HepG2 (cell line): ENCODE measurements at regions of chr3 and their contacts with region 1.

Region 1: GRCh38 chr3:188154014-188154808 is at the start of gene LPP:
- DNase-seq: peak; percentile 47
- ATAC-seq: peak; percentile 88
- H3K4me3 ChIP-seq: peak within 1 kb of the TSS; percentile 83 to 92 (median 88)
- H3K27ac ChIP-seq: peak within 1 kb of the TSS; percentile 73
- H3K4me1 ChIP-seq: peaks cover 64% of the 10 kb centered on the region
- H3K27me3 ChIP-seq: no peaks in the 10 kb centered on the region
- CTCF ChIP-seq: peak; percentile 39
- EP300 ChIP-seq: peak in 1 of 2 experiments; percentile 4; a peak in 1 of 4 replicates
- POLR2A ChIP-seq: no peak; a peak in 1 of 4 replicates
- RAD21 ChIP-seq: peak; percentile 44
- total RNA-seq, gene LPP: 29.9 and 41.6 TPM in 2 replicates

Region 2: GRCh38 chr3:188052169-188053030 is 101.8 kb before region 1 on chr3:
- CTCF ChIA-PET with region 1: no interaction called
- POLR2A ChIA-PET with region 1: interaction called, 11 read pairs
- in situ Hi-C with region 1: no loop called
- intact Hi-C with region 1: loop called (anchors 2 kb)
- DNase-seq: peak; percentile 90
- ATAC-seq: peak; percentile 96
- H3K4me3 ChIP-seq: peak overlapping the region; percentile 10 to 51 (median 26); a peak in 4 of 6 replicates
- H3K27ac ChIP-seq: peak overlapping the region; percentile 72
- H3K4me1 ChIP-seq: peaks cover 76% of the 10 kb centered on the region
- H3K27me3 ChIP-seq: no peaks in the 10 kb centered on the region
- CTCF ChIP-seq: peak; percentile 86
- EP300 ChIP-seq: peak; percentile 62 to 71
- POLR2A ChIP-seq: peak; percentile 54 to 55; a peak in 2 of 4 replicates
- RAD21 ChIP-seq: peak; percentile 76

Region 3: DNA sequence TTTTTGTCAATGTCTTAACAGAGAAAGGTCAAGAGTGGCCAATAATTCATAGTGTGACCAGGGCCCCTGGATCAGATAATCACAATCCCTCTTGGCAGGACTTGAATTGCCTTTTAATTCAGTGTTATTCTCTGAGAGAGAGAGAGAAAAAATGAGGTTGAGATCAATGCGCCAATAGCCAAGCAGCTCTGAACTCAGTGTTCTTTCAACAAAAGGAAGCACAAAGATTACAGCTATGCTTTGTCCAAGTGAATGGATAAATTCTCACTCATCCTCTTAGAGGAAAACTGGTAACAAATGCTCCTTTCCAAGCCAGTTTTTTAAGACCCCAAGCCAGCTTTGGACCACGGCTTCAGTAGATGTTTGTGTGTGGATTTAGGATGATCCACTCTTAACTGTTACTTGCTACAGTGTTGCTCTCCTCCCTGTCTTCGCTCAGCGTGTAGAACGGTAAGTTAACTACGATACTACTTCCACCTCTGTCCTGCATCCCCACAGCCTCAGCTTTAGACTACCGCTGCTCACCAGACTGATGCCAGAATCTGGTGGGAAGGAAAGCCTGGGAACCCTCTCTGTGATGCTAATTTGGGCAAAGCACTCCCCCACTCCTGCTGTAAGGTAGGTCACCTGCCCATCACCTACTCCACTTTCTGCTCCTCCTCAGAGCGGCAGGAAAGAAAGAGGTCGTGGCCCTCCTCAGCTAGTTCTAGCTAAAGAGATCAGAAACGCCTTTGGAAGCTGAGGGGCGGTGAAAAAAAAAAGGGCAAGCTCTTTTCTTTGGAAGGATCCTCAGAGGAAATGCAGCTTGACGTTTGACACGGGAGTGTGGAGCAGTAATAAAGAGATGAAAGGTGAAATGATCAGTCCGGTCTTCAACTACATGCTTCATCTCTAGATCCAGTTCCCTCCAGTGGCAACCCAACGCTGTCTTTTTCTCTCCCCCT is 47.1 kb before region 1 on chr3:
- CTCF ChIA-PET with region 1: no interaction called
- POLR2A ChIA-PET with region 1: no interaction called
- in situ Hi-C with region 1: no loop called
- intact Hi-C with region 1: loop called (anchors 2 kb)
- DNase-seq: no peak
- ATAC-seq: peak; percentile 37; the same call in 1 of the 3 replicates
- H3K4me3 ChIP-seq: no peak overlapping the region
- H3K27ac ChIP-seq: no peak overlapping the region
- H3K4me1 ChIP-seq: peaks cover 50% of the 10 kb centered on the region
- H3K27me3 ChIP-seq: no peaks in the 10 kb centered on the region
- CTCF ChIP-seq: no peak
- EP300 ChIP-seq: no peak
- POLR2A ChIP-seq: no peak
- RAD21 ChIP-seq: no peak

Region 4: GRCh38 chr3:188170461-188171459 is 16.5 kb after region 1 on chr3:
- CTCF ChIA-PET with region 1: no interaction called
- POLR2A ChIA-PET with region 1: interaction called, 16 read pairs
- in situ Hi-C with region 1: no loop called
- intact Hi-C with region 1: loop called (anchors 2 kb)
- DNase-seq: peak; percentile 98
- ATAC-seq: peak; percentile 98
- H3K4me3 ChIP-seq: peak overlapping the region in 2 of 3 experiments; percentile 19 to 36; a peak in 3 of 6 replicates
- H3K27ac ChIP-seq: peak overlapping the region; percentile 83
- H3K4me1 ChIP-seq: peaks cover 96% of the 10 kb centered on the region
- H3K27me3 ChIP-seq: no peaks in the 10 kb centered on the region
- CTCF ChIP-seq: no peak
- EP300 ChIP-seq: peak; percentile 77 to 98; a peak in 3 of 4 replicates
- POLR2A ChIP-seq: no peak
- RAD21 ChIP-seq: no peak

Region 5: DNA sequence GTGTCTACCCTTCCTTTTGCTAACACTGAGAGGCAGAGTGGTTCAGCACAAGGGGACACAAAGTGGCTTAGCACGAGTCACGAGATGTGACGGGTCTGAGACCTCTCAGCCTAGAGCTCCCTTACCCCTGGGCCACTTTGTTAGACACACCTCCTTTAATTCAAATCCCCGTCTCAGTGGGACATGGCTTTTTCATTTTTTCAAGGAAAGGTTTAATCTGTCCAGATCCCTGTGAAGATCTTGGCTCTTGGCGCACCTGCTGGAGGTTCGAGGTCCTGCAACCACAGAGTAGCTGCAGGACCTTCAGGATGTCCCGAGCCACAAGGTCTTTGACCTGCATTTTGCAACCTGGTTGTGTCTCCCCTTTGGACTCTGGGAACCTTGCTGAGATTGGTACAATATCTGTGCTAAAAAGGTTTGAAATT is 51.8 kb after region 1 on chr3:
- CTCF ChIA-PET with region 1: no interaction called
- POLR2A ChIA-PET with region 1: interaction called, 6 read pairs
- in situ Hi-C with region 1: no loop called
- intact Hi-C with region 1: loop called (anchors 5 kb)
- DNase-seq: peak; percentile 81
- ATAC-seq: peak; percentile 93
- H3K4me3 ChIP-seq: no peak overlapping the region
- H3K27ac ChIP-seq: peak overlapping the region; percentile 50
- H3K4me1 ChIP-seq: peaks cover 30% of the 10 kb centered on the region
- H3K27me3 ChIP-seq: no peaks in the 10 kb centered on the region
- CTCF ChIP-seq: peak; percentile 66
- EP300 ChIP-seq: peak in 1 of 2 experiments; percentile 62; a peak in 2 of 4 replicates
- POLR2A ChIP-seq: no peak
- RAD21 ChIP-seq: peak; percentile 69

Region 6: GRCh38 chr3:188283347-188283746 is 129.1 kb after region 1 on chr3:
- CTCF ChIA-PET with region 1: no interaction called
- POLR2A ChIA-PET with region 1: no interaction called
- in situ Hi-C with region 1: no loop called
- intact Hi-C with region 1: loop called (anchors 2 kb)
- DNase-seq: peak; percentile 82
- ATAC-seq: peak; percentile 92
- H3K4me3 ChIP-seq: no peak overlapping the region
- H3K27ac ChIP-seq: peak overlapping the region; percentile 45
- H3K4me1 ChIP-seq: peaks cover 52% of the 10 kb centered on the region
- H3K27me3 ChIP-seq: no peaks in the 10 kb centered on the region
- CTCF ChIP-seq: peak; percentile 44
- EP300 ChIP-seq: peak in 1 of 2 experiments; percentile 53; a peak in 1 of 4 replicates
- POLR2A ChIP-seq: no peak
- RAD21 ChIP-seq: peak; percentile 75

Region 7: GRCh38 chr3:188294823-188295487 is 140.7 kb after region 1 on chr3:
- CTCF ChIA-PET with region 1: no interaction called
- POLR2A ChIA-PET with region 1: interaction called, 10 read pairs
- in situ Hi-C with region 1: no loop called
- intact Hi-C with region 1: no loop called
- DNase-seq: peak; percentile 99
- ATAC-seq: peak; percentile 90
- H3K4me3 ChIP-seq: peak overlapping the region in 1 of 3 experiments; percentile 45; a peak in 2 of 6 replicates
- H3K27ac ChIP-seq: peak overlapping the region; percentile 94
- H3K4me1 ChIP-seq: peaks cover 99% of the 10 kb centered on the region
- H3K27me3 ChIP-seq: no peaks in the 10 kb centered on the region
- CTCF ChIP-seq: no peak
- EP300 ChIP-seq: peak; percentile 90 to 96; a peak in 3 of 4 replicates
- POLR2A ChIP-seq: peak; percentile 48 to 74; a peak in 3 of 4 replicates
- RAD21 ChIP-seq: peak; percentile 37; the same call in 1 of the 2 replicates

Region 8: DNA sequence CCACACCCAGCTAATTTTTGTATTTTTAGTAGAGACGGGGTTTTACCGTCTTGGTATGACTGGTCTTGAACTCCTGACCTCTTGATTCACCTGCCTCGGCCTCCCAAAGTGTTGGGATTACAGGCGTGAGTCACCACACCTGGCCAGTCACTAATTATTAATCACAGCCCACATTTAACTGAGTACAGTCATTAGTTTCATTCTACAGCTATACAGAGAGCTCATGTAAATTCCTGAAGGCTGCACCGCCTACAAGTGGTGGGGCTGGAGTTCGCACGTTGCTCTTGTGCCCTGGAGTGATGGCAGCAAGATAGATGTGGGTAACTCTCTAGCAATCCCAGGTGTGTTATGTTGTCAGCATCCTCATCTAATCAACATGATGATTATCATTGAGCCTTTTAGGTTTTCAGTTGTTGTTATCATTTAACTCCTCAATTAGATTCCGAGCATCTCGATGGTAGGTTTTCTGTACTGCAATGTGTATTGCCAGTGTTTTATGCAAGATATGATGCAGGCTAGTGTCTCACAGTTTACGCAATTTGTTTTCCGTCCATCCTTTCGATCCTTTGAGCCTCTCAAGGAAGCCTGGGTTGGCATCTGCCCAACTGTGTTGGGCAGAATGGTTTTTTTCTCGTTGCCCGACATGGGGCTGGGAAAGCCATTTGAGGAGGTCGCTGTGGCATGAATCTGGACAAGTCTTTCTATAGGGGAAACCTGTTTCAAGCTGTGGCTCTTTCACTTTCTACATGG is 216.0 kb after region 1 on chr3:
- CTCF ChIA-PET with region 1: no interaction called
- POLR2A ChIA-PET with region 1: no interaction called
- in situ Hi-C with region 1: no loop called
- intact Hi-C with region 1: no loop called
- DNase-seq: no peak
- ATAC-seq: peak; percentile 35; the same call in 2 of the 3 replicates
- H3K4me3 ChIP-seq: no peak overlapping the region
- H3K27ac ChIP-seq: no peak overlapping the region
- H3K4me1 ChIP-seq: peaks cover 10% of the 10 kb centered on the region
- H3K27me3 ChIP-seq: no peaks in the 10 kb centered on the region
- CTCF ChIP-seq: no peak
- EP300 ChIP-seq: no peak
- POLR2A ChIP-seq: no peak
- RAD21 ChIP-seq: no peak

Region 9: GRCh38 chr3:188578576-188579363 is 424.6 kb after region 1 on chr3:
- CTCF ChIA-PET with region 1: no interaction called
- POLR2A ChIA-PET with region 1: no interaction called
- in situ Hi-C with region 1: no loop called
- intact Hi-C with region 1: no loop called
- DNase-seq: no peak
- ATAC-seq: no peak
- H3K4me3 ChIP-seq: no peak overlapping the region
- H3K27ac ChIP-seq: no peak overlapping the region
- H3K4me1 ChIP-seq: peaks cover 34% of the 10 kb centered on the region
- H3K27me3 ChIP-seq: no peaks in the 10 kb centered on the region
- CTCF ChIP-seq: no peak
- EP300 ChIP-seq: no peak
- POLR2A ChIP-seq: no peak
- RAD21 ChIP-seq: no peak